ENCODE measurements at regions of chr2 and their contacts with region 1.

Region 1: DNA sequence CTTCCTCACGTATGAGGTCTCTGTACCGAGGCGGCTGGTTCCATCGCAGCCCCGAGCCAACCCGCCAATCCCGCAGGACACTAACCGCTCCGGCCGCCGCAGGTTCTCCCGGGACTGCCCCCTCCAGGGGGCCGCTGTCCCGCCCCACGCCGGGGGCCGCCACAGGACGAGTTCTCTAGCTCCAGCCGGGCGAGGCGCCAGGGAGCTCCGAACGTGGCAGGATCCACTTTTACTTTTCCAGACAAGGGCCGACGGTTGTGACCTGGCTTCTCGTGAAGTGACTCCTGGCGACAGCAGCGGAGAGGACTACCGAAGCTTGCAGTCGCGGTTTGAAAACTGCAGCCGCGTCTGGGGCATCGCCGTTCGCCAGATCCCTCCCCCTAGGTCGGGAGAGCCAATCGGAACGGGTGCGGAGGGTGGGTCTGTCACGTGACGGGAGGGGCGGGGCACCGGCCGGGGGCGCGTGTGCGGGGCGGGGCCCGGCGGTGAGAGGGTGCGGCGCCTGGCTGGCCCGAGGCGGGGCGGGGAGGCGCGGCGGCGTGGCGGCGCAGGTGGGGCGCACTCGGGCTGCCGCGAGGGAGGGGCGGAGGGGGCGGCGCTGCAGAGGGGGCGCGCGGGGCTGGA is at the start of gene STK17B:
- DNase-seq: peak; percentile 96
- H3K4me3 ChIP-seq: peak within 1 kb of the TSS; percentile 66 to 72 (median 70)
- H3K27ac ChIP-seq: peak within 1 kb of the TSS; percentile 68 to 82 (median 74)
- H3K4me1 ChIP-seq: peaks cover 0 to 20% (median 9%) of the 10 kb centered on the region in 4 donors
- H3K27me3 ChIP-seq: no peaks in the 10 kb centered on the region
- CTCF ChIP-seq: no peak
- EP300 ChIP-seq: no peak
- POLR2A ChIP-seq: peak; percentile 50 to 87
- total RNA-seq, gene STK17B: 9.0 to 15.7 (median 12.3) TPM

Region 2: GRCh38 chr2:195820373-195820772 is 351.0 kb before region 1 on chr2:
- intact Hi-C with region 1: no loop called
- DNase-seq: no peak
- H3K4me3 ChIP-seq: no peak overlapping the region
- H3K27ac ChIP-seq: no peak overlapping the region
- H3K4me1 ChIP-seq: no peaks in the 10 kb centered on the region
- H3K27me3 ChIP-seq: no peaks in the 10 kb centered on the region
- CTCF ChIP-seq: no peak
- EP300 ChIP-seq: no peak
- POLR2A ChIP-seq: no peak

Region 3: GRCh38 chr2:196068271-196069209 is 102.8 kb before region 1 on chr2 and contains the start of gene DNAH7:
- intact Hi-C with region 1: loop called (anchors 2 kb)
- DNase-seq: peak; percentile 95
- H3K4me3 ChIP-seq: peak within 1 kb of the TSS; percentile 82 to 87 (median 84)
- H3K27ac ChIP-seq: peak within 1 kb of the TSS; percentile 69 to 80 (median 72)
- H3K4me1 ChIP-seq: peaks cover 0 to 10% (median 6%) of the 10 kb centered on the region in 4 donors
- H3K27me3 ChIP-seq: no peaks in the 10 kb centered on the region
- CTCF ChIP-seq: peak; percentile 64 to 71 (median 65)
- EP300 ChIP-seq: no peak
- POLR2A ChIP-seq: no peak
- total RNA-seq, gene DNAH7: 0.36 to 1.9 (median 0.70) TPM

Region 4: GRCh38 chr2:196639180-196640030 is 468.0 kb after region 1 on chr2 and contains the start of gene CCDC150:
- intact Hi-C with region 1: loop called (anchors 10 kb)
- DNase-seq: peak; percentile 93
- H3K4me3 ChIP-seq: peak within 1 kb of the TSS; percentile 43 to 61 (median 58)
- H3K27ac ChIP-seq: peak within 1 kb of the TSS in 2 of 4 donors; percentile 29 to 44
- H3K4me1 ChIP-seq: peaks cover 0 to 8% (median 7%) of the 10 kb centered on the region in 4 donors
- H3K27me3 ChIP-seq: no peaks in the 10 kb centered on the region
- CTCF ChIP-seq: no peak
- EP300 ChIP-seq: no peak
- POLR2A ChIP-seq: no peak
- total RNA-seq, gene CCDC150: 1.3 to 2.1 (median 1.4) TPM in 3 of 4 donors, not detected in the other

Measured in sigmoid colon (tissue), 7 donors.